HCT116 (cell line): ENCODE measurements at regions of chr2 and their contacts with region 1.

Region 1: DNA sequence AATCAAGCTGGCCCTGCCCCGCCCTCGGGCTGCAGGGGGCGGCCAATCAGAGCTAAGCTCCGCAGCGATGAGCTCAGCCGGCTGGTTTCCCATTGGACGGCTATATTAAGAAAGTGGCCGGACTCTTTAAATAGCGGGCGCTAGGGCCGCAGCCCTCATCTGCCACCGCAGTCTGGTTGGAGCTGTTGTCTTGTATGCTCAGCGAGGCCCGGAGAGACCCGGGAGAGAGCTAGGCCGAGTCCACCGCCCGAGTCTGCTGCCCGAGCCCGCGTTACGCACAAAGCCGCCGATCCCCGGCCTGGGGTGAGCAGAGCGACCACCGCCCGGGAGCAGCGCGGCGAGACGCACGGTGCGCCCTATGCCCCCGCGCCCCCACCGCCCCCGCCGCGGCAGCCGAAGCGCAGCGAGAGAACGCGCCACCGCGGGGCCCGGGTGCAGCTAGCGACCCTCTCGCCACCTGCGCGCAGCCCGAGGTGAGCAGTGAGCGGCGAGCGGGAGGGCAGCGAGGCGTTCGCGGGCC is at the start of gene RHOB:
- DNase-seq: peak; percentile 94
- ATAC-seq: peak; percentile 88
- H3K4me3 ChIP-seq: peak within 1 kb of the TSS; percentile 72 to 80
- H3K27ac ChIP-seq: peak within 1 kb of the TSS; percentile 88
- H3K4me1 ChIP-seq: peaks cover 41 to 53% of the 10 kb centered on the region in 2 experiments
- H3K27me3 ChIP-seq: no peaks in the 10 kb centered on the region
- CTCF ChIP-seq: no peak
- POLR2A ChIP-seq: peak; percentile 99
- RAD21 ChIP-seq: no peak; the same call in 1 of the 2 replicates
- total RNA-seq, gene RHOB: 72.9 TPM

Region 2: GRCh38 chr2:20396356-20397000 is 50.5 kb before region 1 on chr2:
- CTCF ChIA-PET with region 1: interaction called, 7 read pairs
- POLR2A ChIA-PET with region 1: interaction called, 8 read pairs
- RAD21 ChIA-PET with region 1: no interaction called
- intact Hi-C with region 1: loop called (anchors 2 kb)
- DNase-seq: no peak
- ATAC-seq: no peak; the same call in 1 of the 2 replicates
- H3K4me3 ChIP-seq: no peak overlapping the region
- H3K27ac ChIP-seq: no peak overlapping the region
- H3K4me1 ChIP-seq: peaks cover 0 to 19% of the 10 kb centered on the region in 2 experiments; a peak in 2 of 4 replicates
- H3K27me3 ChIP-seq: no peaks in the 10 kb centered on the region
- CTCF ChIP-seq: no peak
- POLR2A ChIP-seq: no peak
- RAD21 ChIP-seq: no peak

Region 3: DNA sequence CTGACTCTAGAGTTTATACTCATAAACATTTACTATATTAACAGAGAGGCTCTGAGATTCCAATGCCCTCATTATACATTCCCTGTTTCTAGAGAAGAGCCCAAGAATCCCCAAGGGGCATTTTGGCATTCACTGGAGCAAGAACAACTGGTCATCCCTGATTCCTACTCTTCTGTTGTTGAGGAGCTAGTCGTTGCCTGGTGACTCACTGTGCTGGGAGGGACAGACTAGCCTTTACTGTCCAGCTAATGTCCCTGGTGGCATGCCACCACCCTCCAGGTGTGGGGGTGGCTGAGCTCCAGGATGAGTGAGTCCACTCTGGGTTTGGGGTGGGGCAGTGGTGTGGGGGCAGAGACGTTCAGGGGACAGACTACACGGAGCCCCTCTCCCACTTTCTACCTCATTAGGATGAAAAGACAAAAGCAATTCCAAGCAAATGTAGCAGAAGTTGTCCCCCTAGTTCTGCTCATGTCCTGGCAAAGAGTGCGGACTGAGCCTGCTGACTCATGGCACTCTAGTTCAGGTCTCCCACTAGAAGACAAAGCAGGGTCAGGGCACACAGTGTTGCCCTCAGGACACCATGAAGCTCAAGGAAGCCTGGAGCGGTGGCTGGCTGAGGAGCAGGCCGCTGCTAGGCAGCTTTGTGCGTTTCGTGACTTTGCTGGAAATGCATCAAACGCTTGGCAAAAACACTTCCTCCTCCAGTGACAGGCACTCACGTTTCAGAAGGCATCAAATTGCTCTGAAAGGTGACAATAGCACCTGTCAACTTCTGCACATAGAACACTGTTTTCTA is 49.3 kb after region 1 on chr2:
- CTCF ChIA-PET with region 1: interaction called, 3 read pairs
- POLR2A ChIA-PET with region 1: interaction called, 11 read pairs
- RAD21 ChIA-PET with region 1: no interaction called
- intact Hi-C with region 1: no loop called
- DNase-seq: peak; percentile 59
- ATAC-seq: peak; percentile 75
- H3K4me3 ChIP-seq: peak overlapping the region in 1 of 2 experiments; percentile 42; a peak in 2 of 4 replicates
- H3K27ac ChIP-seq: no peak overlapping the region
- H3K4me1 ChIP-seq: peaks cover 31 to 49% of the 10 kb centered on the region in 2 experiments
- H3K27me3 ChIP-seq: no peaks in the 10 kb centered on the region
- CTCF ChIP-seq: no peak
- POLR2A ChIP-seq: no peak
- RAD21 ChIP-seq: peak; percentile 9; the same call in 1 of the 2 replicates

Region 4: DNA sequence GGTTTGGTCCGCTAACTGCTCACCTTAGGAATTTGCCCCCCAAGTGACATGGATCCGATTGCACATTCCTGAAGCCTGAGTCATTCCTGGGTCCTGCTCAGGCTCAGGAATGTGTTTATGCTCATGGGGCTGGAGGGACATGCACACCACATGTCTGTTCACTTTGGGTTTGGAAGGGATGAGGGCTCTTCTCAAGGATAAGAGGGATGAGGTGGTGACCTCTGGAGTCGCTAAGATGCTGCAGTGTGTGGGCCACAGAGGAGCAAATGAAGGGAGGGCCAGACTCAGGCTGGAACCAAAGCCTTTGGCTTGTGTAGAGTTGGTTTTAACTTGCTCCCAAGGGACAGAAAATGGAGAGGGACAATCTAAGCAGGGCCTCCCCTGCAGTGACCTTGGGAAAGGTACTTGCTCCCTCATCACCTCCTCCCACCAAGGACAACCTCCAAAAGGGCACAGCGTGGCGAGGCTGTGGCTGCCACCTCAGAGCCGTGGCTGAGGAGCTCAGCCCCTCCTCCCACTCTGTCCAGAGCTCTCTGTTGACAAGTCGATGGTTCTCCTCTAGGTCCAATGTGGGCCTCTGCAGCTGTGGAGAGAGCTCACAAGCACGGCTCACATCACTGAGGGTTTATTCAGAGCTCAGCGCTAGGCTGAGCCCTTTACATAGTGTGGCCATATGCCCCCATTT is 137.8 kb after region 1 on chr2:
- CTCF ChIA-PET with region 1: no interaction called
- POLR2A ChIA-PET with region 1: interaction called, 70 read pairs
- RAD21 ChIA-PET with region 1: interaction called in 1 of 2 experiments, 4 read pairs
- intact Hi-C with region 1: no loop called
- DNase-seq: peak; percentile 87
- ATAC-seq: peak; percentile 82
- H3K4me3 ChIP-seq: peak overlapping the region in 1 of 2 experiments; percentile 46; a peak in 2 of 4 replicates
- H3K27ac ChIP-seq: peak overlapping the region; percentile 89
- H3K4me1 ChIP-seq: peaks cover 43 to 52% of the 10 kb centered on the region in 2 experiments
- H3K27me3 ChIP-seq: no peaks in the 10 kb centered on the region
- CTCF ChIP-seq: no peak
- POLR2A ChIP-seq: no peak
- RAD21 ChIP-seq: no peak

Region 5: DNA sequence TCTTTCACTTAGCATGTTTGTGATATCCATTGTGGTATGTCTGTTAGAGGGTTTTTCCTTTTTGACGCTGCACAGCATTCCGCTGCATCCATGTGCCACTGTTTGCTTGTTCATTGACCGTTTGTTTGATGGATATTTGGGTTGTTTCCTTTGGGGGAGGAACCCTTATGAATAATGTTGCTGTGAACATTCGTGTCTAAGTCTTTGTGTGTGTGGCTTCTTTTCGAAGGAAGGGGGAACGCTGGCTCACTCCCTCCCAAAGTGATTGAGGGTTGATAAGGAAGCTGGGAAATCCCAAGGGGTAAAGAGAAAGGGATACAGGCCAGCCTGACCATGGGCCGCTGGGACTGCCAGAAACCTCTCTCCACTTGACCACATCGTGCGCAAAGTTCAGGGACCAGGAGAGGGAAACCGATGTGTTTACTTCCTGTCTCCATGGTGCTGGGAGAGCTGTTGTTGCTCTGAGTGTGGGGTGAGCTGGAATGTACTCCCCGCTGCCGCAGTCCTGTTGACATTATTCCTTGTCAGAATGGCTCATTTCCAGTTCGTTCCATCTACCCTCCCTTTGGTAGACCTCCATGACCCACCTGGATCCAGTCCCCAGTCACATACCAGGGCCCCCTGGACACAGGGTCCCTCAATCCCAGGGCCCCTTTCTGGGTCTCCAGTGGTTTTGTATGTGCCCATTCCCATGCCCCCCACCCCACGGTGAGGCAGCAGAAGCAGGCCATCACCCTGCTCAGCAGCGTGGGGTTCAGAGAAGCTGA is 164.3 kb after region 1 on chr2:
- CTCF ChIA-PET with region 1: interaction called, 3 read pairs
- POLR2A ChIA-PET with region 1: interaction called, 53 read pairs
- RAD21 ChIA-PET with region 1: no interaction called
- intact Hi-C with region 1: no loop called
- DNase-seq: no peak
- ATAC-seq: no peak
- H3K4me3 ChIP-seq: no peak overlapping the region
- H3K27ac ChIP-seq: no peak overlapping the region
- H3K4me1 ChIP-seq: peaks cover 12 to 21% of the 10 kb centered on the region in 2 experiments; a peak in 3 of 4 replicates
- H3K27me3 ChIP-seq: no peaks in the 10 kb centered on the region
- CTCF ChIP-seq: no peak
- POLR2A ChIP-seq: no peak
- RAD21 ChIP-seq: no peak

Region 6: DNA sequence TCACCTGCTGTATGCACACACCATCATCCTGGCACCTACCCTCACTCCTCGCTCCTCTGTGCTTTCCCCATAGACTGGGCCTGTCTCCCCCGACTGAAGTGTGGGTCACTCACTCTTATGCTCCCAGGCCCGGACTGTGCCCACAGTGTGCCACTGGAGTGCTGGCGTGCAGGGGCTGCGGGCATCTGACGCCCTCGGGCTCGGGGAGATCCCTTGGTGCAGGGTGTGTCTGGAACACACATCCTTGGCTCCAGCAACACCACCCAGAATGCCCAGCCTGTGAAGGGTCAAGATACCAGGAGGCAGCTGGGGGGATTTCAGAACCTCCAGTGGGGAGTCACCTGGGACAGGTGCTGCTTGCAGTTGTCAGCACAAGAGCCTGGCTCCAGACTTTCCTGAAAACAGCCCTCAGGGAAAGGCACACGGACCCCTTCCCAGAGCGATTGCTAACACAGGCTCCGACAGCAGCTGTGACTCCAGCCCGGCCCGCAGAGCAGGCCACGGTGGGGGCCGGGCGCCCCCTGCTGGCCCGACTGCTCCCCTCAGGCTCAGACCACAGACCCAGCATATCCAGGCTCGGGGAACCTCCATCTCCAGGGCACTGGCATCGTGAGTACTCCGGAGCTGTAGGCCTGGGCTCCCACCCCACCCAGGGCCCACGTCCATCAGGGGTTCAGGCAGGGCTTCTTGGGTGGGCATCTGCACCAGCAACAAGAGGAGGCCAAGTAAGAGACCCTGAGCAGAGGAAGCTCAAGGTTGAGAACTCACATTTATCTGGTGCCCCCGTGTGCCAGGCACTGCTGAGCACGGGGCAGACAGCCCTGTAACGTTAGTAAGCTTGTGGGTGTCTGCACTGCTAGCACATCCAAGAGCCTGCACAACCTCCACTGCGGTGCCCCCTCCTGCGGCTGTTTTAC is 195.3 kb after region 1 on chr2:
- CTCF ChIA-PET with region 1: interaction called, 11 read pairs
- POLR2A ChIA-PET with region 1: interaction called, 19 read pairs
- RAD21 ChIA-PET with region 1: interaction called, 3 read pairs
- intact Hi-C with region 1: loop called (anchors 1 kb)
- DNase-seq: peak; percentile 16
- ATAC-seq: peak; percentile 99
- H3K4me3 ChIP-seq: no peak overlapping the region
- H3K27ac ChIP-seq: no peak overlapping the region
- H3K4me1 ChIP-seq: no peaks in the 10 kb centered on the region; a peak in 1 of 4 replicates
- H3K27me3 ChIP-seq: no peaks in the 10 kb centered on the region
- CTCF ChIP-seq: peak; percentile 86 to 96 (median 90)
- POLR2A ChIP-seq: no peak
- RAD21 ChIP-seq: peak; percentile 94